Activated T-helper 2 cell treated with anti-CD3 and anti-CD28 coated beads, Interferon-gamma antibody, Interleukin-2, Interleukin-4, amounts not matched to agents 10 μg/mL and 5 μg/mL and 100 μg/mL, durations not matched to agents 14 hours and 24 hours and 36 hours (primary cell): ENCODE measurements at regions of chr1 and their contacts with region 1.

Region 1: GRCh38 chr1:203512830-203513611 is 19.1 kb downstream of the OPTC start:
- DNase-seq: no peak
- H3K4me3 Mint-ChIP-seq: peak overlapping the region; percentile 6
- H3K27ac Mint-ChIP-seq: peak overlapping the region; percentile 85
- H3K4me1 Mint-ChIP-seq: peaks cover 24% of the 10 kb centered on the region
- H3K27me3 Mint-ChIP-seq: no peaks in the 10 kb centered on the region

Region 2: GRCh38 chr1:203612932-203613682 is 100.1 kb after region 1 on chr1:
- intact Hi-C with region 1: loop called (anchors 5 kb)
- DNase-seq: no peak
- H3K4me3 Mint-ChIP-seq: no peak overlapping the region
- H3K27ac Mint-ChIP-seq: peak overlapping the region; percentile 67
- H3K4me1 Mint-ChIP-seq: peaks cover 52% of the 10 kb centered on the region
- H3K27me3 Mint-ChIP-seq: no peaks in the 10 kb centered on the region

Region 3: DNA sequence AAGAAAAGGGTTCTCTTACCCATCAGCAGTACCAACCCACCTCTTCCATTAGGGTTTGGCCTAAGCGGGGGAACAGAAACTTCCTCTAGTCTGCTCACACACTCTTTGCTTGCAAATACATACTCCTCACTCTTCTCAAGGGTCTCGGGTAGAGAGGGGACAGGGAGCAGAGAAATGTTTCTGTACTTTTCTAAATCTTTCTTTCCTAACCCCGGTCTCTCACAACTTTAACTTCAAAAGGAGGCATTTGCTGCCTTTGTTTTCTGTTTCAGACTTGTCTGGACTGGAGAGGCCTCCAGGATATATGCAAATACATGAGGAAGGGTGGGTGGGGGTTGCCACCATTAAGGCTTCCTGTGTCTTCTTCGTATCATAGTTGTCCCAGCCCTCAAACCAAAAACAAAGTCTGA is 241.4 kb after region 1 on chr1:
- intact Hi-C with region 1: no loop called
- DNase-seq: no peak
- H3K4me3 Mint-ChIP-seq: no peak overlapping the region
- H3K27ac Mint-ChIP-seq: peak overlapping the region; percentile 87
- H3K4me1 Mint-ChIP-seq: peaks cover 17% of the 10 kb centered on the region
- H3K27me3 Mint-ChIP-seq: no peaks in the 10 kb centered on the region